Activated T-helper 2 cell treated with anti-CD3 and anti-CD28 coated beads, Interferon-gamma antibody, Interleukin-2, Interleukin-4, amounts not matched to agents 10 μg/mL and 5 μg/mL and 100 μg/mL, durations not matched to agents 14 hours and 24 hours and 36 hours (primary cell): ENCODE measurements at regions of chr11 and their contacts with region 1.

Region 1: GRCh38 chr11:109853156-109853776 is 239.9 kb upstream of the ZC3H12C start:
- DNase-seq: no peak
- H3K4me3 Mint-ChIP-seq: no peak overlapping the region
- H3K27ac Mint-ChIP-seq: no peak overlapping the region
- H3K4me1 Mint-ChIP-seq: peaks cover 4% of the 10 kb centered on the region
- H3K27me3 Mint-ChIP-seq: peaks cover 4% of the 10 kb centered on the region

Region 2: DNA sequence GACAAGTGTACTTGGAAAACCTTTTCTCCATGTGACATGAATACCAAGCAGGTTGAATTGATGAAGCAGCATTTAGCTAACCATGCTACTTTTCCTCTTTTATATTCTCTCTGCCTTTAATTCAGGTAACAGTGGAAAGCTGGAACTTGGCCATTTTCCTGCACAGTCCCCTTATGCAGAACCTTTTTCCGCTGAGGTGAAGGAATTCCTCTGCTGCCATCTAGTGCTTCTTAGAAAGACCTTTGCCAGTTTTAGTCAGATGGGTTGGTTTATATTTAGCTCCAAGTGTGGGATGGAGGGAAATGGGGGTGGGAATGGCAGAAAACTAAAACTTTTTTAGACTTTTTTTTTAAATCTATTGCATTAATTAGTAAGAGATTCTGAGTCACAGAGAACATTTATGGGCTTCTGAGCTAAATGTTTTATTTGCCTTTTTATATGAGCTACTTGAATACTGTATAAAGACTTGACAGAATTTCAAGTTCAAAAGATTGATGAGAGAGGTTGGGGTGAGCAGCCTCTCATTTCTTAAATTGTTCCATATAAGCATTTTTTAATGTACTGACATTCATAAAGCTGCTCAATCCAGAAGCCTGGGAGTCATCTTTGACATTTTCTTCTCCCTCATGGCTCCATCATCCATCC is 86.0 kb after region 1 on chr11:
- intact Hi-C with region 1: loop called (anchors 1 kb)
- DNase-seq: no peak
- H3K4me3 Mint-ChIP-seq: no peak overlapping the region
- H3K27ac Mint-ChIP-seq: no peak overlapping the region
- H3K4me1 Mint-ChIP-seq: peaks cover 5% of the 10 kb centered on the region
- H3K27me3 Mint-ChIP-seq: peaks cover 29% of the 10 kb centered on the region